Activated CD4-positive, alpha-beta memory T cell treated with anti-CD3 and anti-CD28 coated beads for 36 hours (primary cell): ENCODE measurements at regions of chr9 and their contacts with region 1.

Region 1: DNA sequence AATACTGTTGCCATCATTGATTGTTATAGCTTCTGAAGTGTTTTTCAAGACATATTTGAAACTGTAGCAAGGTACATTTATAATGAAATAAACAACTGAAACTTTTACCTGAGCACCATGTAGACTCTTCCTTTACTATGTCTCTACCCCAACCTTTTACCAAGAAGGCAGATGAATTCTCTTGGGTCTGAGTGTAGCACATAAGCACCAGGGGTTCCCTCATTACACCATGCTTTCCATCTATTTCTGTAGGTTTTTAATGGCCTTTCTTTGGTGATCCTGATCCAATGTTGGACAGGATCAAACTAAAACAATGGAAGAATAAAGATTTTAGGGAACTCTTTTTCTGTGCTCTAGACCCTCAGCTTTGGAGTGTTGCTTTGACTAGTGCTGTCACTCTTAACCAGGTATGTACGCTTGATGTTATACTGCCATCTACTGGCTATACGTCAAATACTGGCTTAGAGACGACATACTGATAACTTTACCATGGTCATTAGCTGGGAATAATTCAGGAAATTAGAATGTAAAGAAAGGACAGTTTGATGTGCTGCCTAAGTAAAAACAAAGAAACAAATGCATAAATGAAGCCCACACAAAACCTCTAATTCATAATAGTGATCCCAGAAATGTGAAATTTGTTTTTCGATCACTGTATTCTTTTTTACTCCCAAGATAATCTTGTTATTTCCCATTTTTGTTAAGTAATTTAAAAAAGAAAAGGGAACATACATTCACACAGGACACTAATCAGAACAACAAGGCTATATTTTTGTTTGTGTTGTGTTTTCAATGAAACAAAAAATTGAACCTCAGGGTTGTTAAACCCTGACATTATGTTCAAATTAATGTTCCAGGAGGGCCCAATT is 30.7 kb downstream of the IFNW1 start:
- DNase-seq: no peak
- H3K4me3 Mint-ChIP-seq: no peak overlapping the region
- H3K27ac Mint-ChIP-seq: no peak overlapping the region
- H3K4me1 Mint-ChIP-seq: no peaks in the 10 kb centered on the region
- H3K27me3 Mint-ChIP-seq: no peaks in the 10 kb centered on the region

Region 2: DNA sequence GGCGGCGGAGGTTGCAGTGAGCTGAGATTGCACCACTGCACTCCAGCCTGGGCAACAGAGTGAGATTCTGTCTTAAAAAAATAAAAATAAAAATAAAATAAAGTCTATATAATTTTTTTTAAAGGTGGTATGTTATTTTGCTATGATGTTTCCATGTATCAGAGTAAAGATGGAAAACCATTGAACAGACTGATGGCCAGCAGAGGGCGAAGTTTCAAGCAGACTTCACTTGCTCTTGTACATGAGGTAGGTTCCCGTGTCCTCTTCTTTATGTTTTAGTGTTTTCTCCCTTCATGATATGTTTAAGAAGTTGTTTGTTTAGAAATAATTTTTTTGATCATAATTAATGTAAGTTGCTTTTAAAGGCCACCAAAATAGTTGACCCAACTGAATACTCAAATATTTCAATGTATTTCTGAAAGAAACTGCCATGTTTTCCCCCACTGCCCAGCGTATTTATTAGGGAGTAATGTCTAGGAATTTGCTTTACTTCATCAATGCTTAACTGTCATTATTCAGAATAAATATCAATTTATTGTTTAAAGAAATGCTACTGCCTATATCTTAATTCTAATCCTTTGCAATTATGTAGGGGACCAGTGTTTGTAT is 225.9 kb before region 1 on chr9:
- CTCF ChIA-PET with region 1: interaction called, 70 read pairs
- POLR2A ChIA-PET with region 1: no interaction called
- intact Hi-C with region 1: loop called (anchors 1 kb)
- DNase-seq: peak; percentile 69
- H3K4me3 Mint-ChIP-seq: no peak overlapping the region
- H3K27ac Mint-ChIP-seq: no peak overlapping the region
- H3K4me1 Mint-ChIP-seq: no peaks in the 10 kb centered on the region
- H3K27me3 Mint-ChIP-seq: no peaks in the 10 kb centered on the region

Region 3: DNA sequence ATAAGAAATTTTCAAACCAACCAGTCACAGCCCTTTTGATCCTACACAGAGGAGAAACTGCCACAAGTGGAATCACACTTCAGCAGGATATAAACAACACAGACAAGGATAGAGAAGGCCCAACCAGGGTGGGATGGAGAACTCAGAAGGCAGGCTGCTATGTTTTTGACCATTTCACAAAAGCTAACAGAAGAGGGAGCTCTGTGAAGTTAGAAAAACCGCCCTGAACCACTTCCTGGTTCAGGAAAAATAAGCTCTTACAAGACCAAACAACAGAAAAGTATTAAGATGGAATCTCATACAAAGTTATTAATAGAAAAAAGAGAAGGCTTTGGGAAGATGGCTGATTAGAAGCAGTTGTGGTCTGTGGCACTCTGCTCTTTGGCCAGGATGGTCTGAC is 32.2 kb before region 1 on chr9:
- CTCF ChIA-PET with region 1: interaction called, 64 read pairs
- POLR2A ChIA-PET with region 1: no interaction called
- intact Hi-C with region 1: loop called (anchors 2 kb)
- DNase-seq: no peak
- H3K4me3 Mint-ChIP-seq: no peak overlapping the region
- H3K27ac Mint-ChIP-seq: no peak overlapping the region
- H3K4me1 Mint-ChIP-seq: peaks cover 21% of the 10 kb centered on the region
- H3K27me3 Mint-ChIP-seq: peaks cover 2% of the 10 kb centered on the region

Region 4: GRCh38 chr9:21096172-21096900 is 14.6 kb before region 1 on chr9:
- CTCF ChIA-PET with region 1: interaction called, 23 read pairs
- POLR2A ChIA-PET with region 1: no interaction called
- intact Hi-C with region 1: no loop called
- DNase-seq: peak; percentile 49
- H3K4me3 Mint-ChIP-seq: peak overlapping the region; percentile 73
- H3K27ac Mint-ChIP-seq: peak overlapping the region; percentile 85
- H3K4me1 Mint-ChIP-seq: peaks cover 34% of the 10 kb centered on the region
- H3K27me3 Mint-ChIP-seq: no peaks in the 10 kb centered on the region

Region 5: DNA sequence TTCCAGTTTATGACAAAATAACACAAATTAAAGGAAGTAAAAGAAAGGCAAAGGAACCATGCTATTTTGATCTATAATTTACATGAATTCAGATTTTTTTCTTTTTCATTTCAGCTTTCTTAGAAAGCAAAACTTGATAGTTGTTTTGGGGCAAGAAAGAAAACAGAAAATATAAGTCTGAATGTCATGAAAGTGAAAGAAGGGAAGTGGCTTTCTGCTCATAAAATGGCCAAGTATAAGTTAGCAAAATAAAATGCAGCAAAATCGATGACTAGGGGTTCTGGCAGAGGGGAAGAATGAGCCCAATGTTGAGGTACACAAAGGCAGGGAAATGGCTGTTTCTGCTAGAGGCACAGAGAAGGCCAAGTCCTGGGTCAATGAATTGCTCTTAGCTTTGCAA is 33.7 kb after region 1 on chr9:
- CTCF ChIA-PET with region 1: no interaction called
- POLR2A ChIA-PET with region 1: no interaction called
- intact Hi-C with region 1: no loop called
- DNase-seq: no peak
- H3K4me3 Mint-ChIP-seq: no peak overlapping the region
- H3K27ac Mint-ChIP-seq: no peak overlapping the region
- H3K4me1 Mint-ChIP-seq: peaks cover 22% of the 10 kb centered on the region
- H3K27me3 Mint-ChIP-seq: no peaks in the 10 kb centered on the region

Region 6: GRCh38 chr9:21252721-21253547 is 142.0 kb after region 1 on chr9:
- CTCF ChIA-PET with region 1: no interaction called
- POLR2A ChIA-PET with region 1: no interaction called
- intact Hi-C with region 1: no loop called
- DNase-seq: peak; percentile 31
- H3K4me3 Mint-ChIP-seq: no peak overlapping the region
- H3K27ac Mint-ChIP-seq: no peak overlapping the region
- H3K4me1 Mint-ChIP-seq: peaks cover 4% of the 10 kb centered on the region
- H3K27me3 Mint-ChIP-seq: peaks cover 10% of the 10 kb centered on the region